ENCODE measurements at regions of chr15 and their contacts with region 1.

Region 1: DNA sequence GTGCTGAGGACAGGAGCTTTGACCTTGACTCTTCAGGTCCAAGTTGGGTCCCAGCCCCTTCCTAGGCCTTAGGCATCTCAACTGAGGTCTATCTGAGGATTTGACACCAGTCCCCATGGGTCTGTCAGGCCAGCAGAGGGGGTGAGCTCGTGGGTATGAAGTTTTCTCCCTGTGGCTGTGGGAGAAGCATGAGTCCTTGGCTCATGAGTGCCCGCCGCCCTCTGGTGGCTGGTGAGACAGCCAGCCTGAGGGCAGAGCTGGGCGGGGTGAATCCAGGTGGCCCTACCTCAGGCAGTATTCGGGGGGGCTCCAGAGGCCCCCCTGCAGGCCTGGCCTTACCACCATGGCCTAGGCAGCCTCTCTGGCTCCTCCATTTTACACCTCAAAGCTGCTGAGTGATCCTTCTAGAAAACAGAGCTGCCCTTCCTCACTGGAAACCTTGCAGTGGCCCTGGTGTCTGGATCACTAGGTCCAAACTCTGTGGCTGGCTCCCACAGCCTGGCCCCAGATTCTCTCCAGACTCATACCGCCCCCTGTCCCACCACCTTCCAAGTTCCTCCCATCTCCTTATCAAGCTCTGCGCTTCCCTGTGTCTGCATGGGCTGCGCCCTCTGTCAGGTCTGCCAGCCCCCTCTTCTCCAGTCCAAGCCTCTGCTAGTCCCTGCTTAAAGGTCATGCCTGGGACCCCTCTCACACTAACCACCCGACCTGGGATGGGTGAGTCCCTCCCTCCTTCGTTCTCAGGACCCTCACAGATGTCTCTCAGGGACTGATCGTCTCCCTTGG is 16.1 kb downstream of the SH2D7 start:
- DNase-seq: peak; percentile 71
- H3K4me3 ChIP-seq: no peak overlapping the region
- H3K27ac ChIP-seq: peak overlapping the region; percentile 21
- H3K27me3 ChIP-seq: no peaks in the 10 kb centered on the region
- CTCF ChIP-seq: peak; percentile 97

Region 2: DNA sequence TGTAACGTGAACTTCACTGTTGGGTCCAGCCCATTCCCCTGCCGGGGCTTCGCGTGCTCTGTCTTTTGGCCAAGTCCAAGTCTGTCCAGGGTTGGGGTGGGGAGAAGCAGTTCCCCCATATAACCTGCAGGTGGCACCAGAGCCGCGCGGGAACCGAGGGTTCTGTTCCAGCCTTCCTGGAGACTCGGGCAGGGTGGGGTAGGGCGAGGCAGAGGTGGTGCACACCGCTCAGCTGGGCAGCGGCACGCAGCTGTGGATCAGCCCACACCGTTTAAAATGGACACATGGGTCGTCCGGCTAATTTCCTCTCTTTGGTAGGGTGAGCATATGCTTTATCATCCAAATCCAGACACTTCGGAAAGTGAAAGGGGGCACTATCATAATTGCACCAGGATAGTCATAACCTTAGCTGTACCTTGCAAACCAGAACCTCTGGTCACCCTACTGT is 149.0 kb before region 1 on chr15:
- CTCF ChIA-PET with region 1: interaction called, 327 read pairs
- POLR2A ChIA-PET with region 1: no interaction called
- DNase-seq: peak; percentile 20
- H3K4me3 ChIP-seq: peak overlapping the region; percentile 36
- H3K27ac ChIP-seq: no peak overlapping the region
- H3K27me3 ChIP-seq: peaks cover 53% of the 10 kb centered on the region
- CTCF ChIP-seq: peak; percentile 96

Region 3: DNA sequence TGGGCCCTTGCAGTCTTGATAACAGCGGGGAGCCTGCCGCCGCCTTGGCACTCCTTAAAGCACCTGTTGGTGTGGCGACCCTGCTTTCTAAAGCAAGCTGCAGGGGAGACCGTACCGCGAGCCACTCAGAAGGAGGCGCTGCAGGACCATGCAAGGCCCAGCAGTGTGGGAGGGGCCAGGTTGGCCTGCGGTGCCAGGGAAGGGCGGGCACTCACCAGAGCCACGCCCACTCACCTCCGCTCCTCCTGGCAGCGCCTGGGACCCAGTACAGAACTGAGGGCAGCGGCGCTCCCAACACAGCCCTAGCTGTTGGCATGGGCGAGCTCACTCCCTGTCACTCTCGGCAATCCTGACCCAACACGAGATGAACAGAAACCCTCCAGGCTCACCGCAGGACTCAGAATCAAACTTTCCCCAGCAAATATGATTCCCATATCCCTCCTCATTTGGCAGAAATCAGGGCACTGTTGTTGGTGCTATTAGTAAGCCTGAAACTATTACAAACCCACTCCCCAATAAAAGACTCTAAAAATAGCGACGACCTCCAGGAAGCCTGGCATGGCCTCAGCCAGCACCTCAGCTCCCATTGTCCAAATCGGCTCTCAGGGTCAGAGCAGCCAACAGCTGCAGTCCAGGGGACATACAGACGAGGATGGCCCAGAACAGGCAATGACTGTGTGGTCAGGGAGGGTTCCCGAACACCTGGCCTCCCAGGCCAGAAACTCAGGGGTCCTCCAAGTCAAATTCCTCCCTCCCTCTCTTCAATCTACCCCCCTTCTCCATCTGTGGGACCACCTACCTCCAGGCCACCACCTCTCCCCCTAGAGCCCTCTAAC is 108.2 kb before region 1 on chr15:
- CTCF ChIA-PET with region 1: interaction called, 36 read pairs
- POLR2A ChIA-PET with region 1: interaction called, 7 read pairs
- DNase-seq: no peak
- H3K4me3 ChIP-seq: no peak overlapping the region
- H3K27ac ChIP-seq: no peak overlapping the region
- H3K27me3 ChIP-seq: no peaks in the 10 kb centered on the region
- CTCF ChIP-seq: peak; percentile 30

Region 4: DNA sequence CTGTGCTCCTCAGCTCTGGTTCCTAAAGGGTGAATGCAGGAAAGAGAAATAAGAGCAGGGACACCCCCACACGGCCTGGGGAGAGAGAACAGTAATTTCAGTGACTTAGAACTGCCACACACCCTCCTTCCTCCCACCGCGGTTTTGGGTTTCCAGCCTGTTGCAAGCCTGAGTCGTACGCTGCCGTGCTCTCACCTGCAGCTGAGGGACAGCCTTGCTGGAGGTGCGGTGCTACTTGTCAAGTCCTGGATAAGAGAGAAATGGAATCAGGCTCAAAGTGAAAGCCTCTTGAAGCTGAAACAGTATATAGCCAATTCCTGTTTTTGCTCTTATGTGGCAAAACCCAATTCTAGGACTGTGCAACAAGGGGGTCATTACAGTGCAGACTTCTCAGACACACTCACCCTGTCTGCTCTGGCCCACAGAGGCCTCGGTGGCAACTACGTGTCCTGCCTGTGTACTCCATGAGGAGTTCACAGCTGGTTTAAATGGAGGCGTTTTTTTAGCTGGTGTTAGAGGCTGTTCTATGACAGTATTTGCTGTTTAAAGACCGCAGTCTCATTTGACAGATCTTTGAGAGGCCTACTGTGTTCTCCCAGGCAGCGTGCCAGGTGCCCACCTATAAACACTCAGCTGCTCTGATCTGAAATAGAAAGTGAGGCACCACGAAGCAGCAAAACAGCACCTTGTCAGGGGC is 73.8 kb before region 1 on chr15:
- CTCF ChIA-PET with region 1: interaction called, 11 read pairs
- POLR2A ChIA-PET with region 1: no interaction called
- DNase-seq: no peak
- H3K4me3 ChIP-seq: 0 out of 2 replicates have a peak overlapping the region, but pooled peaks have one; percentile 5
- H3K27ac ChIP-seq: peak overlapping the region; percentile 35
- H3K27me3 ChIP-seq: no peaks in the 10 kb centered on the region
- CTCF ChIP-seq: no peak

Region 5: GRCh38 chr15:78065284-78065872 is 43.1 kb before region 1 on chr15:
- CTCF ChIA-PET with region 1: interaction called, 14 read pairs
- POLR2A ChIA-PET with region 1: no interaction called
- DNase-seq: peak; percentile 94
- H3K4me3 ChIP-seq: peak overlapping the region; percentile 25; the same call in 1 of the 2 replicates
- H3K27ac ChIP-seq: peak overlapping the region; percentile 98
- H3K27me3 ChIP-seq: no peaks in the 10 kb centered on the region
- CTCF ChIP-seq: no peak

Region 6: DNA sequence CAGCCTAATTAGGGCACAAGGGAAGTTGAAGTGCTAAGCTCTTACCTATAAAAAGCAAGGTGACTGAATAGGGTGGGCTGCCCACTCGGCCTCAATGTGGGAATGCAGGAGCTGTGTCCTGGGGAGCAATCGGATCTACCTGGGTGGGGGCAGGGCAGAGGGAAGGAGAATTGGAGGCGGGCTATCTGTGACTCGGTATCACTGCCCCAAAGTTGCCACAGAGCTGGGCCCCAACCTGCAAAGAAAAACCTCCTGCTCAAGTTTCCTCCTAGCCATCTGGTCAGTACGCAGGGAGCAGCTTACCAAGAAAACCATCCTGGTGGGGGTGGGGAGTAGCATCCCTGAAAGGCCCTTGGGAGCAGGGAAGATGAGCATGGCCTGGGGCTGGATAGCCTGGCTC is 12.0 kb after region 1 on chr15:
- CTCF ChIA-PET with region 1: interaction called, 21 read pairs
- POLR2A ChIA-PET with region 1: no interaction called
- DNase-seq: no peak
- H3K4me3 ChIP-seq: no peak overlapping the region
- H3K27ac ChIP-seq: no peak overlapping the region
- H3K27me3 ChIP-seq: peaks cover 22% of the 10 kb centered on the region
- CTCF ChIP-seq: no peak

Region 7: GRCh38 chr15:78195735-78196201 is 87.3 kb after region 1 on chr15:
- CTCF ChIA-PET with region 1: interaction called, 12 read pairs
- POLR2A ChIA-PET with region 1: no interaction called
- DNase-seq: no peak
- H3K4me3 ChIP-seq: no peak overlapping the region
- H3K27ac ChIP-seq: no peak overlapping the region
- H3K27me3 ChIP-seq: peaks cover 9% of the 10 kb centered on the region
- CTCF ChIP-seq: peak; percentile 60

Measured in AG04450 (cell line).